Mammary epithelial cell (primary cell): ENCODE measurements at regions of chr15 and their contacts with region 1.

Region 1: GRCh38 chr15:26891448-26892181 is 24.8 kb downstream of the GABRA5 start:
- DNase-seq: peak; percentile 41
- H3K4me3 ChIP-seq: peak overlapping the region in 2 of 3 experiments; percentile 20 to 32
- H3K27ac ChIP-seq: no peak overlapping the region
- H3K4me1 ChIP-seq: peaks cover 6% of the 10 kb centered on the region
- H3K27me3 ChIP-seq: no peaks in the 10 kb centered on the region
- CTCF ChIP-seq: peak; percentile 76 to 80

Region 2: GRCh38 chr15:26864664-26865191 is 26.9 kb before region 1 on chr15:
- CTCF ChIA-PET with region 1: no interaction called
- dilution Hi-C with region 1: no loop called
- in situ Hi-C with region 1: no loop called
- intact Hi-C with region 1: no loop called
- DNase-seq: peak; percentile 5
- H3K4me3 ChIP-seq: no peak overlapping the region
- H3K27ac ChIP-seq: no peak overlapping the region
- H3K4me1 ChIP-seq: no peaks in the 10 kb centered on the region
- H3K27me3 ChIP-seq: peaks cover 3% of the 10 kb centered on the region
- CTCF ChIP-seq: peak; percentile 43 to 64

Region 3: DNA sequence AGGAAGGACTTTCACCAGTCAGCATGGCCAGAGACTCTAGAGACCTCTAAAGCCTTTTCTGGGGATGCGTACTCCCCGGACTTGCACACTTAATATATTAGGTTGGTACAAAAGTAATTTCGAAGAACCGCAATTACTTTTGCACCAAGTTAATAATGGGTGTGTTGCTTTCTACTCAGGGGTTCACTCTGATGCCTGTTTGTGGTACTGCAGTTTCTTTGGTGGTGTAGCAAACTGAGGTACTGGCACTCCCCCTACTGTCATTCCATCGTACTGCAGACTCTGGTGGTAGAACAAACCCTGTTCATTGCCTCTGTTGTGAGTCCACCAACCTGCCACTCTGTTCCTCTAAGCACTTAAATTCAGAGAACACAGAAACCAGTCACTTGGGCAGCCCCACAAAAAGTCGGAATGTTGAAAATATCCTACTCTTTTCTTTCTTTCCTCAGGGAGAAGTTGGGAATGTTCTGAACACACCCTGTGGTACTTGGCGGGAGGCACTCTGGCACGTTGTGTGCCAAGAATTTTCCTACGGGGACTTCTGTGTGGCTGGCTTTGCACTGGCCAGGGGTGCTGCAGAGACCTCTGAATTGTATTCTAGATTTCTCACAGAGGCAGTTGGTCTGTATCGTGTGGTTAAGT is 125.7 kb after region 1 on chr15:
- CTCF ChIA-PET with region 1: no interaction called
- dilution Hi-C with region 1: no loop called
- in situ Hi-C with region 1: no loop called
- intact Hi-C with region 1: loop called (anchors 2 kb)
- DNase-seq: peak; percentile 16
- H3K4me3 ChIP-seq: no peak overlapping the region
- H3K27ac ChIP-seq: no peak overlapping the region
- H3K4me1 ChIP-seq: no peaks in the 10 kb centered on the region
- H3K27me3 ChIP-seq: no peaks in the 10 kb centered on the region
- CTCF ChIP-seq: peak; percentile 25 to 45

Region 4: GRCh38 chr15:28123408-28124023 is 1231.9 kb after region 1 on chr15:
- CTCF ChIA-PET with region 1: interaction called, 3 read pairs
- dilution Hi-C with region 1: no loop called
- in situ Hi-C with region 1: loop called in 1 of 2 experiments (anchors 10 kb)
- intact Hi-C with region 1: loop called (anchors 1 kb)
- DNase-seq: peak; percentile 93
- H3K4me3 ChIP-seq: no peak overlapping the region
- H3K27ac ChIP-seq: peak overlapping the region; percentile 47
- H3K4me1 ChIP-seq: peaks cover 11% of the 10 kb centered on the region
- H3K27me3 ChIP-seq: no peaks in the 10 kb centered on the region
- CTCF ChIP-seq: peak; percentile 70 to 78

Region 5: GRCh38 chr15:28228096-28228495 is 1336.5 kb after region 1 on chr15:
- CTCF ChIA-PET with region 1: no interaction called
- dilution Hi-C with region 1: no loop called
- in situ Hi-C with region 1: no loop called
- intact Hi-C with region 1: loop called (anchors 10 kb)
- DNase-seq: no peak
- H3K4me3 ChIP-seq: no peak overlapping the region
- H3K27ac ChIP-seq: no peak overlapping the region
- H3K4me1 ChIP-seq: no peaks in the 10 kb centered on the region
- H3K27me3 ChIP-seq: no peaks in the 10 kb centered on the region
- CTCF ChIP-seq: no peak